Heart left ventricle (tissue), 16 donors: ENCODE measurements at regions of chr5 and their contacts with region 1.

Region 1: GRCh38 chr5:126339215-126339805 is 83.9 kb upstream of the GRAMD2B start:
- DNase-seq: peak in 2 of 5 donors; percentile 28 to 40
- ATAC-seq: no peak
- H3K4me3 ChIP-seq: no peak overlapping the region
- H3K27ac ChIP-seq: no peak overlapping the region
- H3K4me1 ChIP-seq: no peaks in the 10 kb centered on the region
- H3K27me3 ChIP-seq: peaks cover 0 to 7% (median 0%) of the 10 kb centered on the region in 9 donors
- CTCF ChIP-seq: peak; percentile 79 to 93 (median 86)
- POLR2A ChIP-seq: no peak

Region 2: DNA sequence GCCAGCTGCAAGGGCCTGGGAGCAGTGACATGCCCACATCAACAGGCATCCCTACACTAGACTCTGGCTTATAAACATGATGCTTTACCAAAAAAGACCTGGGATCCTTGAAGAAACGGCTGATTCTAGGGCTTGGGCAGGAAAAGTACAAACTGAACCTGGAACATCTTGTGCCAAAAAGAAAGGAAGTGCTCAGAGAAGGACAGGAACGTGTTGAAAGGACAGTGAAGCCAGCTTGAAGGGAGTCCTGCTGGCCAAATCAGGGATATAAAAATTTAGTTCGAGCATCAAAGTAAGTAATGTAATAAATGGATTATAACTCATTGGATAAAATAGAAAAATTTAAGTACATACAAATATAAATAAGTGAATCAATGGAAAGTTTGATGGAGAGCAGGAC is 197.6 kb after region 1 on chr5:
- intact Hi-C with region 1: loop called in 5 of 10 experiments (anchors 1 to 5 kb)
- DNase-seq: no peak
- ATAC-seq: no peak
- H3K4me3 ChIP-seq: no peak overlapping the region
- H3K27ac ChIP-seq: peak overlapping the region in 1 of 12 donors; percentile 22
- H3K4me1 ChIP-seq: peaks cover 0 to 16% (median 5%) of the 10 kb centered on the region in 12 donors
- H3K27me3 ChIP-seq: no peaks in the 10 kb centered on the region
- CTCF ChIP-seq: no peak
- POLR2A ChIP-seq: no peak

Region 3: DNA sequence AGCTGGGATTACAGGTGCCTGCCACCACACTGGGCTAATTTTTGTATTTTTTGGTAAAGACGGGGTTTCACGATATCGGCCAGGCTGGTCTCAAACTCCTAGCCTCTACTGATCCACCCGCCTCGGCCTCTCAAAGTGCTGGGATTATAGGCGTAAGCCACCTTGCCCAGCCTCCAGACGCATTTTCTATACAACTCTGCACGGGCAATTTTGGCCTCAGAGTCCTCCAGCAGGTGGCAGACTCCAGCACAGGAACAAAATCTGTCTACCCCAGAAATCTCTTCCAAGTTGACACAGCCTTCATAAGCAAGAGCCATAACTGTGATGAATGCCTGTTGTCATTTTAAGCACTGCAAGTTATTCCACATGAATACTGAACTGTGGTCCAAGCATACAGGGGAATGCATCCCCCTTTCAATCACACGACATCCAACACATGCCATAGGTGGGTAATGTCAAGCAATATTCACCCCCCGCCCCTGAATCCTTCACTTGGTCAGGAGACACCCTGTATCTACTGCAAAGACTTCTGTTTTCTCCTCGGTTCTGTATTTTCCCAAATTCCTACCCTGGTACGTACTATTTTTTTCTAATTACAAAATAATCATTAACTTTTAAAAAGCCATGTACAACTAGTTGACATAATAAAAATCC is 204.9 kb after region 1 on chr5:
- intact Hi-C with region 1: loop called in 4 of 10 experiments (anchors 1 to 5 kb)
- DNase-seq: no peak
- ATAC-seq: no peak
- H3K4me3 ChIP-seq: no peak overlapping the region
- H3K27ac ChIP-seq: no peak overlapping the region
- H3K4me1 ChIP-seq: peaks cover 0 to 2% (median 0%) of the 10 kb centered on the region in 12 donors
- H3K27me3 ChIP-seq: no peaks in the 10 kb centered on the region
- CTCF ChIP-seq: peak; percentile 7 to 46 (median 26)
- POLR2A ChIP-seq: no peak

Region 4: GRCh38 chr5:126594676-126595485 is 255.6 kb after region 1 on chr5 and contains the start of gene ALDH7A1:
- intact Hi-C with region 1: loop called in 4 of 10 experiments (anchors 2 to 5 kb)
- DNase-seq: peak; percentile 93 to 96 (median 95)
- ATAC-seq: peak; percentile 96 to 97 (median 96)
- H3K4me3 ChIP-seq: peak within 1 kb of the TSS; percentile 33 to 83 (median 72)
- H3K27ac ChIP-seq: peak within 1 kb of the TSS in 11 of 12 donors; percentile 62 to 93 (median 77)
- H3K4me1 ChIP-seq: peaks cover 0 to 23% (median 12%) of the 10 kb centered on the region in 12 donors
- H3K27me3 ChIP-seq: no peaks in the 10 kb centered on the region
- CTCF ChIP-seq: peak; percentile 20 to 70 (median 38)
- POLR2A ChIP-seq: peak in 1 of 2 donors; percentile 68
- total RNA-seq, gene ALDH7A1: 12.3 to 67.6 (median 45.0) TPM

Region 5: DNA sequence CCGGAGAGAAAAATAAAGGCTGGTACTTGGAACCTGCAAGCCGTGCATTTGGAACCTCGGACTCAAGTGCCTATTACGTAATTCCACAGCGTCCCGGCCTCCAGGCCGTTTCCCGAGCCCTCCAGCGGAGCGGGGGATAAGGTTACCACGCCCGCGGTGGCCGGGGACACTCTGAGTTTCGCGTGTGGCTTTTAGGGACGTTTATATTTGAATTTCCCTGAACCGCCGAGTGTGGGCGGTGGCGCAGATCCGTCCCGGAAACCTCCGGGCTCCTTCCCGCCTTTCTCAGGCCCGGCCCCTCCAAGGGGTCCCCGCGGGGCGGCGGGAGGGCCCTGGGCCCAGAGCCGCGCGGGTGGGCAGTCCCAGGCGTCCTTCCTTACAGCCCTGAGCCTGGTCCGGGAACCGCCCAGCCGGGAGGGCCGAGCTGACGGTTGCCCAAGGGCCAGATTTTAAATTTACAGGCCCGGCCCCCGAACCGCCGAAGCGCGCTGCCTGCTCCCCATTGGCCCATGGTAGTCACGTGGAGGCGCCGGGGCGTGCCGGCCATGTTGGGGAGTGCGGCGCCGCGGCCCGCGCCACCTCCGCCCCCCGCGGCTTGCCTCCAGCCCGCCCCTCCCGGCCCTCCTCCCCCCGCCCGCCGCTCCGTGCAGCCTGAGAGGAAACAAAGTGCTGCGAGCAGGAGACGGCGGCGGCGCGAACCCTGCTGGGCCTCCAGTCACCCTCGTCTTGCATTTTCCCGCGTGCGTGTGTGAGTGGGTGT is 437.4 kb after region 1 on chr5 and contains the start of gene LMNB1:
- intact Hi-C with region 1: loop called in 1 of 10 experiments (anchors 10 kb)
- DNase-seq: peak; percentile 94 to 98 (median 95)
- ATAC-seq: peak; percentile 91 to 97 (median 95)
- H3K4me3 ChIP-seq: peak within 1 kb of the TSS; percentile 64 to 88 (median 80)
- H3K27ac ChIP-seq: peak within 1 kb of the TSS; percentile 55 to 94 (median 86)
- H3K4me1 ChIP-seq: peaks cover 0 to 33% (median 11%) of the 10 kb centered on the region in 12 donors
- H3K27me3 ChIP-seq: no peaks in the 10 kb centered on the region
- CTCF ChIP-seq: peak in 4 of 12 donors; percentile 13 to 39 (median 25)
- POLR2A ChIP-seq: peak in 1 of 2 donors; percentile 26
- total RNA-seq, gene LMNB1: 1.3 to 27.8 (median 1.8) TPM